ENCODE measurements at regions of chr11 and their contacts with region 1.

Region 1: DNA sequence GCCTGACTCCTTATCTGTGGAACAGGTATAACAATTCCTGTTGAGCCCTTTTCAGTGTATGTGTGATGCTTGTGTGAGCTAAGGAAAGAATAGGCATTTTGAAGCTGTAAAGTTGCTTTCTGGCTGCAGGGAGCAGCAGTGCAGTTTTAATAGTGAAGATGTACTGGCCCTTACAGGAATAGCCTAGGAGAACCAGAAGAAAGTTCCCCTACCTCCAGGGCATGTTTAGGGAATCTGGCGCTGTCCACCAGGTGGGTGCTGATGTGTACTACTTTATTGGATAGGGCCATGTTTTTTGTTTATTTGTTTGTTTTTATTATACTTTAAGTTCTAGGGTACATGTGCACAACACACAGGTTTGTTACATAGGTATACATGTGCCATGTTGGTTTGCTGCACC is 11.5 kb downstream of the BMAL1 start:
- DNase-seq: no peak
- H3K4me3 Mint-ChIP-seq: no peak overlapping the region
- H3K27ac Mint-ChIP-seq: peak overlapping the region; percentile 91
- H3K4me1 Mint-ChIP-seq: peaks cover 58% of the 10 kb centered on the region
- H3K27me3 Mint-ChIP-seq: no peaks in the 10 kb centered on the region

Region 2: GRCh38 chr11:13152736-13153533 is 136.1 kb before region 1 on chr11:
- intact Hi-C with region 1: no loop called
- DNase-seq: no peak
- H3K4me3 Mint-ChIP-seq: no peak overlapping the region
- H3K27ac Mint-ChIP-seq: no peak overlapping the region
- H3K4me1 Mint-ChIP-seq: peaks cover 2% of the 10 kb centered on the region
- H3K27me3 Mint-ChIP-seq: peaks cover 6% of the 10 kb centered on the region

Region 3: DNA sequence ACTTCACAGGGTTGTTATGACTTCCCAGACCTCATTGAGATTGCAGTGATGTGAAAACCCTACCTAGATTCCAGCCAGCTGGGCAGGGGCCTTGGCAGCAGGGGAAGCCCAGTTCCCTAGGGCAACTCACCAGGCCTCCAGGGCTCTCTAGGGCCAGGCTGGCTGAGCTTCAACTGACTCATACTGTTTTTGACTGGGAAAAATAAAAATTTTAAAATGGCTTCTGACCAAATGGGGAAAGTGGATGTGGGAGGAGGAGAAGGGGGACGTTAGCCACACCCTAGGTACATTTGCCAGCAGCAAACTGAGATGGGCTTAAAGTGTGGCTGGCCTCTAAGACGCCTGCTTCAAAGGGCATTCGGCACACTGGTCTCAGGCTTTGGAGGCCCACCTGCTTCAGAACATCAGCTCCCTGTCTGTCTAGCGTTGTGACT is 27.5 kb after region 1 on chr11:
- intact Hi-C with region 1: loop called (anchors 2 kb)
- DNase-seq: no peak
- H3K4me3 Mint-ChIP-seq: no peak overlapping the region
- H3K27ac Mint-ChIP-seq: peak overlapping the region; percentile 3
- H3K4me1 Mint-ChIP-seq: peaks cover 43% of the 10 kb centered on the region
- H3K27me3 Mint-ChIP-seq: no peaks in the 10 kb centered on the region